Activated CD4-positive, alpha-beta memory T cell treated with anti-CD3 and anti-CD28 coated beads for 36 hours (primary cell): ENCODE measurements at regions of chr5 and their contacts with region 1.

Region 1: DNA sequence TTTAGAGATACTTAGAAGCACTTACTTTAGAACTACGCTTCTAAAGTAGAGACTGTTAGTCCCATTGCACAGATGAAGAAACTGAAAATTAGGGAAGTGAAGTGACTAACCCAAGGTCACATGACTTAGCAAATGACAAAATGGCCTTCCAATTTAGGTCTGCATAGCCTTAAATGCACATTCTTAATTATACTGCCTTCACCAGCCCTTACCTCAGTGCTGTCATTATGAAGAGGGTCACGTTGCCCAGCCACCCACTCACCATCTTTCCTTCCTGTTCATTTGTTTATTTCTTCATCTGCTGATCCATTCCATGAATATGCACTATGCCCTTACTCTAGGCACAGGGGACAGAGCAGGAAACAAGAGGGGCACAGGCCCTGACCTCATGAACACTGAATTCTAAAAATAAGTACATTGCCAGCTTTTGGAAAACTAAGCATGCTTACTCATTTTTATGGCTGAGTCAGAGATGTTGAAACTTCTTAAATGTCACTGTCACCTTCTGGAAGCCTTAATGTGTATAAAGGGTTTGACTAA is 8.6 kb downstream of the HAVCR2 start:
- DNase-seq: peak; percentile 69
- H3K4me3 Mint-ChIP-seq: peak overlapping the region; percentile 27
- H3K27ac Mint-ChIP-seq: peak overlapping the region; percentile 96
- H3K4me1 Mint-ChIP-seq: peaks cover 20% of the 10 kb centered on the region
- H3K27me3 Mint-ChIP-seq: no peaks in the 10 kb centered on the region

Region 2: DNA sequence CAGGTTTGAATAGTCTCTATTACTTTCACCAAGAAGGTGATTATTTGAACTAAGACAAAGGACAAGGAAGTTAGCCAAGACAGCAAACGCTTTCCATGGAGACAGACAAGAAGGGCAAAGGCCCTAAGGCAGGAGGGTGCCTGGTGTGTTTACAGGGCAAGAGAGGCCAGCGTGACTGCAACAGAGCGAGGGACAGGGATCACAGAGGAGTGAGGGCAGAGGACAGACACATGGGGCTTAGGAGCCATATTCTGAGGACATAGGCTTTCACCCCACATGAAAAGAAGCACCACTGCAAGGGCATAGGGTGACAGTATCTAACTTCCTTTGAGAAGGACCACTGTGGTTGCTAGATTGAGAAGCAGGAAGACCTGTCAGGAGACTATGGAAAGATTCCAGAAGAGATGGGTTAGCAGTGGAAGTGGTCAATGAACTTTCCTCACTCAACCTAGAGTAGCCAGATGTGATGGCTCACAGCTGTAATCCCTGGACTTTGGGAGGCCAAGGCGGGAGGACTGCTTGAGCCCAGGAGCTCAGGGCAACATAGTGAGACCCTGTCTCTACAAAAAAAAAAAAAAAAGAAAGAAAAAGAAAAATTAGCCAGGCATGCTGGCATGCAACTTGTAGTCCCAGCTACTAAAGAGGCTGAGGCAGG is 36.3 kb before region 1 on chr5:
- CTCF ChIA-PET with region 1: no interaction called
- POLR2A ChIA-PET with region 1: no interaction called
- intact Hi-C with region 1: no loop called
- DNase-seq: no peak
- H3K4me3 Mint-ChIP-seq: no peak overlapping the region
- H3K27ac Mint-ChIP-seq: no peak overlapping the region
- H3K4me1 Mint-ChIP-seq: no peaks in the 10 kb centered on the region
- H3K27me3 Mint-ChIP-seq: no peaks in the 10 kb centered on the region

Region 3: DNA sequence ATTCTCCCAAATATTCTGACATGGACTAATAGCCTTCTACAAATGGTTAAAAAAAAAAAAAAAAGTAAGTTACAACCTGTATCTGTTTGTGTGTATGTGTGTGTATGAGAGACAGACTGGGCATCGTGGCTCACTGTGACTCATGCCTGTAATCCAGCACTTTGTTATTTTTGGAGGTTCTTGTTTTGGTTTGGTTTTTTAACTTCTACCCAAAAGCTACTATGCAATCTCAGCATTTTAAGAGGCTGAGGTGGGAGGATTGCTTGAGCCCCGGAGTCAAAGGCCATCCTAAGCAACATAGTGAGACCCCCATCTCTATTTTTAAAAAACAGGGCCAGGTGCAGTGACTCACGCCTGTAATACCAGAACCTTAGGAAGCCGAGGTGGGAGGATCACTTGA is 23.7 kb before region 1 on chr5:
- CTCF ChIA-PET with region 1: no interaction called
- POLR2A ChIA-PET with region 1: no interaction called
- intact Hi-C with region 1: loop called (anchors 2 kb)
- DNase-seq: peak; percentile 22
- H3K4me3 Mint-ChIP-seq: no peak overlapping the region
- H3K27ac Mint-ChIP-seq: no peak overlapping the region
- H3K4me1 Mint-ChIP-seq: peaks cover 22% of the 10 kb centered on the region
- H3K27me3 Mint-ChIP-seq: no peaks in the 10 kb centered on the region

Region 4: GRCh38 chr5:157142317-157143126 is 42.3 kb after region 1 on chr5 and contains the start of gene MED7:
- CTCF ChIA-PET with region 1: interaction called, 3 read pairs
- POLR2A ChIA-PET with region 1: no interaction called
- intact Hi-C with region 1: loop called (anchors 2 kb)
- DNase-seq: peak; percentile 96
- H3K4me3 Mint-ChIP-seq: peak within 1 kb of the TSS; percentile 96
- H3K27ac Mint-ChIP-seq: peak within 1 kb of the TSS; percentile 99
- H3K4me1 Mint-ChIP-seq: peaks cover 49% of the 10 kb centered on the region
- H3K27me3 Mint-ChIP-seq: no peaks in the 10 kb centered on the region
- total RNA-seq, gene MED7: 17.2 to 19.2 TPM

Region 5: DNA sequence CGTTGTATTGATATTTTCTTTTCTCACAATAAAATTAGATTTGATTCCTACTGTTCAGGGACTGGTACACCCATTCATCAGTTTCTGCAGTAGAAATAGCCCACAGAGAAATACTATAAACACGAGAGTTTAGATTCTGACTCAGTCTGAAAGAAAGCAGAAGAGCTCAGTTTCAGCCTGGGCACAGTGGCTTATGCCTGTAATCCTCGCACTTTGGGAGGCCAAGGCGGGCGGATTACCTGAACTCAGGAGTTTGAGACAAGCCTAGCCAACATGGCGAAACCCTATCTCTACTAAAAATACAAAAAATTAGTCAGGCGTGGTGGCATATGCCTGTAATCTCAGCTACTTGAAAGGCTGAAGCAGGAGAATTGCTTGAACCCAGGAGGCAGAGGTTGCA is 89.0 kb after region 1 on chr5:
- CTCF ChIA-PET with region 1: no interaction called
- POLR2A ChIA-PET with region 1: no interaction called
- intact Hi-C with region 1: no loop called
- DNase-seq: peak; percentile 76
- H3K4me3 Mint-ChIP-seq: peak overlapping the region; percentile 99
- H3K27ac Mint-ChIP-seq: peak overlapping the region; percentile 100
- H3K4me1 Mint-ChIP-seq: peaks cover 75% of the 10 kb centered on the region
- H3K27me3 Mint-ChIP-seq: no peaks in the 10 kb centered on the region